Spleen (tissue), 13 donors: ENCODE measurements at regions of chr19 and their contacts with region 1.

Region 1: DNA sequence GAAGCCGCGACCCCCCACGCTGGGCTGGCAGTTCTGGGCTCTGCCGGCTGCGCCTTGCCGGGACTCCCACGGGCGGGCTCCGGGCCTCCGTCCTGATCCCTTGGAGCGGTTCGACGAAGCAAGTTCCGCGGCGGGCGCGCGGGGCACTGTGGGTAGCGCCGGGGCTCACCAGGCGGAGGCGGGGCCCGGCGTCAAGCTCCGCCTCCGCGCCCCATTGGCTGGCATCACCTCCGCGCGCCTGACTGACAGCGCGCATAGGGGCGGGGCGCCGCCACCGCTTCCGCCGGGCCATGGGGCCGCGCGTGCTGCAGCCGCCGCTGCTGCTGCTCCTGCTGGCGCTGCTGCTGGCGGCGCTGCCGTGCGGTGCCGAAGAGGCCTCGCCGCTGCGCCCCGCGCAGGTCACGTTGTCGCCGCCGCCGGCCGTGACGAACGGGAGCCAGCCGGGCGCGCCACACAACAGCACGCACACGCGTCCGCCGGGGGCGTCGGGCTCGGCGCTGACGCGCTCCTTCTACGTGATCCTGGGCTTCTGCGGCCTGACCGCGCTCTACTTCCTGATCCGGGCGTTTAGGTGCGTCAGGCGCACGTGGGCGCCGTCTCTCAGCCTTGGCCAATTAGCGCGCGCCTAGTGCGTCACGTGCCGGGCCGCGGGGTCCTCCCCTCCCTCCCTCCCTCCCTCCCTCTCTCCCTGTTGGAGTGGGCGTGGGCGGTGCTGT is at the start of gene FAM174C:
- DNase-seq: peak; percentile 98
- H3K4me3 ChIP-seq: peak within 1 kb of the TSS; percentile 42 to 83 (median 66)
- H3K27ac ChIP-seq: peak within 1 kb of the TSS; percentile 92 to 100 (median 100)
- H3K4me1 ChIP-seq: peaks cover 63 to 93% (median 75%) of the 10 kb centered on the region in 6 donors
- H3K27me3 ChIP-seq: no peaks in the 10 kb centered on the region
- CTCF ChIP-seq: peak in 2 of 11 experiments; percentile 10 to 27
- POLR2A ChIP-seq: peak in 2 of 3 donors; percentile 75 to 79
- total RNA-seq, gene FAM174C: 35.8 to 69.6 (median 43.9) TPM

Region 2: DNA sequence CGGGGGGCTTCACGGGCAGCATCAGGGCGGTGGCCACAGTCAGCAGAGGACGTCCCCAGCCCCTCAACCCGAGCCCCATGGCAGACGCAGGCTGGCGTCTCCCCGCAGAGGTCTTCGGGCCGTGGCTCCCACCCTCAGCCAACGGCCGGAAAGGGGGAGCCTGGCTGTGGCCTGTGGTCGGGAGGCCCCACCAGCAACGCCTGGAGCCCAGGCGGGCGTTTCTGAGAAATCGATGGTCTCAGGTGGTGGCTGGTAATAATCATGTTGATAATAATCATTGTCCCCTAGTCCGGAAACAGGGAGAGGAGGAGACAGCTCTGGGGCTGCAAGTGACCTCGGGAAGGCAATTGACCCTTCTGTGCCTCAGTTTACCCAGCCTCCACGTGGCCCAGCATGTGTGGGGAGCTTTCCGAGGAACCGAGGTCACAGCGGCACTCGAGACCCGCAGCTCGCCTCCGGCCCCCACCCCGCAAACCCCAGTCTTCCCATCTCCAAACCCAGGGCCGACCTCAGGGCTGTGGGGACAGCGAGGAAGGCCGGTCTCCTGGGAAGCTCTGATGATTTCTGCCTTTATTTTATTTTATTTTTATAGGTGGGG is 580.0 kb before region 1 on chr19 and contains the start of gene PRSS57:
- intact Hi-C with region 1: no loop called
- DNase-seq: no peak
- H3K4me3 ChIP-seq: peak within 1 kb of the TSS in 1 of 8 donors; percentile 33
- H3K27ac ChIP-seq: no peak within 1 kb of the TSS
- H3K4me1 ChIP-seq: peaks cover 0 to 39% (median 17%) of the 10 kb centered on the region in 6 donors
- H3K27me3 ChIP-seq: peaks cover 0 to 61% (median 17%) of the 10 kb centered on the region in 7 donors
- CTCF ChIP-seq: no peak
- POLR2A ChIP-seq: no peak
- total RNA-seq, gene PRSS57: 0.46 to 2.5 (median 0.60) TPM in 5 of 7 donors, not detected in the others

Region 3: GRCh38 chr19:1057176-1057855 is 218.1 kb before region 1 on chr19:
- intact Hi-C with region 1: no loop called
- DNase-seq: peak; percentile 78
- H3K4me3 ChIP-seq: no peak overlapping the region
- H3K27ac ChIP-seq: peak overlapping the region in 5 of 8 donors; percentile 24 to 59 (median 44)
- H3K4me1 ChIP-seq: peaks cover 0 to 13% (median 4%) of the 10 kb centered on the region in 6 donors
- H3K27me3 ChIP-seq: no peaks in the 10 kb centered on the region
- CTCF ChIP-seq: peak in 7 of 11 experiments; percentile 33 to 54 (median 44)
- POLR2A ChIP-seq: no peak

Region 4: GRCh38 chr19:1336079-1336684 is 60.8 kb after region 1 on chr19:
- intact Hi-C with region 1: no loop called
- DNase-seq: no peak
- H3K4me3 ChIP-seq: no peak overlapping the region
- H3K27ac ChIP-seq: no peak overlapping the region
- H3K4me1 ChIP-seq: no peaks in the 10 kb centered on the region
- H3K27me3 ChIP-seq: peaks cover 0 to 34% (median 0%) of the 10 kb centered on the region in 7 donors
- CTCF ChIP-seq: no peak
- POLR2A ChIP-seq: no peak

Region 5: DNA sequence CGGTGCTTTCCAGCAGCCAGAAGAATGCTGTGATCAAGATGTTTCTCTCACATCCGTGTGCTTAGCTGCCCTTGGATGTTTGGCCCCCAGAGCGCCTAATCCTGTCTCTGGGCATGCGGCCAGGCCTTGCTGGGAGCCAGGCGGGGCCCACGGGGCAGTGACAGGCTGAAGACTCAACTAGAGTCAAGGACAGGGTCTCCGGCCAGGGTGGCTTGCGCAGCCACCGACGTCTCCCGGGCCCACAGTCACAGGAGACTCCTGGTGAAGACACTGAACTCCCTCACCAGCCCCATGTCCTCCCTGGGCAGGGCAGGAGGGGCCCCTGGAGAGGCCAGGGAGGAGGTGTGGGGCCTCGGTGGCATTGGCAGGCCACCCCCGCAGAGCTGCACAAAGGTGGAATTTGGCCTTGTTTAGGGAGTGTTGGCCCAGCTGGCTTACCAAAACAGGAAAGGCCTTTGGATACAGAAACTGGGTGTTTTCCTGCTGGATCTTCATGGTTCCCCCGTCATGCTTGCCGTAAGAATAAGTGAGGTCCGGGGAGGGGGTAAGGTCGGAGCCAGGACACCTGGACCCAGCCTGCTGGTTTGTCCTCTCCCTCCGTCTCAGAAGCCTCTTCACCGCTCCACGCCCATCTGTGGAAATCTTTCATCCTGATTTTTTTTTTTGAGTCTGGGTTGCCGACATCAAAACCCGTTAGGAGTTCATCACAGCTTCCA is 98.3 kb after region 1 on chr19:
- intact Hi-C with region 1: loop called (anchors 10 kb)
- DNase-seq: peak; percentile 85
- H3K4me3 ChIP-seq: no peak overlapping the region
- H3K27ac ChIP-seq: peak overlapping the region; percentile 68 to 89 (median 74)
- H3K4me1 ChIP-seq: peaks cover 9 to 56% (median 31%) of the 10 kb centered on the region in 6 donors
- H3K27me3 ChIP-seq: no peaks in the 10 kb centered on the region
- CTCF ChIP-seq: no peak
- POLR2A ChIP-seq: no peak

Region 6: GRCh38 chr19:1394252-1395193 is 119.1 kb after region 1 on chr19:
- intact Hi-C with region 1: no loop called
- DNase-seq: no peak
- H3K4me3 ChIP-seq: no peak overlapping the region
- H3K27ac ChIP-seq: no peak overlapping the region
- H3K4me1 ChIP-seq: peaks cover 0 to 20% (median 8%) of the 10 kb centered on the region in 6 donors
- H3K27me3 ChIP-seq: no peaks in the 10 kb centered on the region
- CTCF ChIP-seq: no peak
- POLR2A ChIP-seq: no peak

Region 7: GRCh38 chr19:1406774-1407499 is 131.5 kb after region 1 on chr19:
- intact Hi-C with region 1: loop called (anchors 10 kb)
- DNase-seq: peak; percentile 99
- H3K4me3 ChIP-seq: peak overlapping the region; percentile 38 to 98 (median 68)
- H3K27ac ChIP-seq: peak overlapping the region; percentile 60 to 98 (median 94)
- H3K4me1 ChIP-seq: peaks cover 32 to 77% (median 60%) of the 10 kb centered on the region in 6 donors
- H3K27me3 ChIP-seq: peaks cover 0 to 21% (median 0%) of the 10 kb centered on the region in 7 donors
- CTCF ChIP-seq: peak in 9 of 11 experiments; percentile 27 to 59 (median 52)
- POLR2A ChIP-seq: peak in 2 of 3 donors; percentile 3 to 22